ENCODE measurements at regions of chr14 and their contacts with region 1.

Region 1: GRCh38 chr14:92783816-92784431 is 10.2 kb upstream of the GOLGA5 start:
- DNase-seq: peak; percentile 60
- CTCF ChIP-seq: peak; percentile 46

Region 2: GRCh38 chr14:92719890-92720323 is 64.0 kb before region 1 on chr14:
- in situ Hi-C with region 1: loop called (anchors 5 kb)
- DNase-seq: no peak
- CTCF ChIP-seq: no peak

Region 3: GRCh38 chr14:93332853-93333630 is 549.1 kb after region 1 on chr14 and contains the start of gene BTBD7:
- in situ Hi-C with region 1: no loop called
- DNase-seq: peak; percentile 98
- CTCF ChIP-seq: no peak